Posterior vena cava (tissue), 2 donors: ENCODE measurements at regions of chr1 and their contacts with region 1.

Region 1: DNA sequence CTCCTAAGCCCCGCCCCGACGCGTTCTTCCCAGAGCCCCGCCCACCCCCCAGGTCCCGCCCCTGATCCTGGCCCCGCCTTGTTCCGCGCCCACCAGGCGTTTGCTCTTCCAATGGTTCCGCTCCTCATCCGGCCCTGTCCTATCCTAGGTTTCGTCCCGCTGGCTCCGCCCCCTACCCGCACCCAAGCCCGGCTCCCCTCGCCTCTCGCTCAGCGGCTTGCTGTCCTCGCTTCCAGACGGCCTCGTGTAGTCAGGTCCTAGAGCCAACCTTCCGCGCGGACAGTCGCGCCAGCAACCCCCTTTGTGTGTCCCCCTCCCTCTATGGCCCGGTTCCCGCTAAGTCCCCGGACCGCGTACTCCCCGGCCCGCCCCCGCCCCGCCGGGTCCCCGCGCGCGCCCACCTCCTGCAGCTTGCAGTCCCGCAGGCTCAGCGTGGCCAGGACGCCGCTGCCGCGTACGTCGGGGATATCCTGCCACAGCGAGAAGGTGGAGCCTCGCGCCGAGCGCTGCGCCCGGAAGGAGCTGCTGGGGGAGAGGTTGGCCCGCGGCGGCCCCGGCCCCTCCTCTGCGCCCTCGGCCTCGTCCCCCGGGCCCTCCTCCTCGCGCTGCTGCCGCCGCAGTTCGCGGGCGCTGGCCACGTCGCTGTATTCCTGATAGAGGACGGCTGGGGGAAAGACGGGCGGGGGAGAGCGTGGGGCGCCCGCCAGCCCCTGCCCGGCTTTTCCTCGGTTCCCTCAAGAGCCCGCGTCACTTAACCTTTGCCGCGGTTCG is 5.7 kb downstream of the ARHGEF19 start:
- DNase-seq: peak; percentile 99

Region 2: DNA sequence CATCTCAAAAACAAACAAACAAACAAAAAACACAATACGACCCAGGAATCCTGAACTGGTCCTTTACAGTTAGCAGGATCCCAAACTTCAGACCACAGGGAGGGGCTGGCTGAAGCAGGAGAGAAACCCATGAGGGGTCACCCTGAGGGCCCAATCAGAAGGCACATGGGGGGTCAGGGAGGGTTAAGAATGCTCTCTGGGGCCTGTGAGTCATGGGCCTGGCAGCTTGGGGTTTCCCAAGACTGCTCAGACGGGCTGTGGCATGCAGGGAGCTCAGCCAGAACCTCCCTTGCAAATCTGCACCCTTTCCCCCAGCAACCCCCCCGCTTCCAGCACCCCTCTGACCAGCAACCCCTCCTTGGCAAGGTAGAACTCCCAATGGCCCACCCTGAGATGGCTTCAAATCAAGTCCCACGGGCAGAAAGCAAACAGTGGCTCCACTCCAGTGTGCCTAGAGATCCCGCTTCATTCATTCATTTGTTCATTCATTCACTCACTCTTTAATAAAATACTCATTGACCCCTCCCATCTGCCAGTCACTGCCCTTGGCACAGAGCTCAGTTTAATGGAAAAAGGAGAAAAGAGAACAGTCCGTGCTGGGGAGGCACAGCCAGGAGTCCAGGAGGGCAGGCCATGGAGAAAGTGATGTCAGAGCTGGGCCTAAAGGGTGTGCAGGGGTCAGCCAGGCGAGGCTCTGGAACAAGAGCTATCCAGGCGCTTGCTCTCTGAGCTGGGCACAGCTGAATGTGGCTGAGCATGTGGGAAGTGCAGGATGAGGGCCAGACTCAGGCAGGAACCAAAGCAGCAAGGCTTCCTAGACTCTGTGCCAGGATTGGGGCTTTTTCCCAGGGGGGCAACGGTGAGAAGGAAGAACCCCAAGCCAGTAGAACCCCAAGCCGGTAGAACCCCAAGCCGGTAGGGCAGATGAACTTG is 407.5 kb before region 1 on chr1:
- intact Hi-C with region 1: no loop called
- DNase-seq: peak; percentile 95

Region 3: DNA sequence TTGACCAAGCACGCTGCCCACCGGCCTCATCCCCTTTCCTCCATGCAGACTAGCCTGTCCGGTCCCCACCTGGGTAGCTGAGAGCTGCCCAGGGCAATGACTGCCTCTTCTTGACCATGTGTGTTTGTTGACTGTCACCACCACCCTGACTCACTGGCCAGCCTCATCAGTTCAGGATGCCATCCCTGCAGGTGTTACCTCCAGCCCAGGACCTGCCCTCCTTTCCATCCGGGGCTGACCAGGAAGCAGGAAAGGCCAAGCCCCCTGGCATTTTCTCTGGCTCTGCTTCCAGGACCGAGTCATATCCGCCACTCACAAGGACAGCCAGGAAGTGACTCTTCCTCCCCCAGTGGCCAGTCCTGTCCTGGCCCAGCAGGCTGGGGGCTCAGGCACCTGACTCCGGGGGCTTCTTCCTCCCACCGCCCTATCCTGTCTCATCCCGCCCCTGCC is 67.9 kb before region 1 on chr1:
- intact Hi-C with region 1: no loop called
- DNase-seq: no peak

Region 4: DNA sequence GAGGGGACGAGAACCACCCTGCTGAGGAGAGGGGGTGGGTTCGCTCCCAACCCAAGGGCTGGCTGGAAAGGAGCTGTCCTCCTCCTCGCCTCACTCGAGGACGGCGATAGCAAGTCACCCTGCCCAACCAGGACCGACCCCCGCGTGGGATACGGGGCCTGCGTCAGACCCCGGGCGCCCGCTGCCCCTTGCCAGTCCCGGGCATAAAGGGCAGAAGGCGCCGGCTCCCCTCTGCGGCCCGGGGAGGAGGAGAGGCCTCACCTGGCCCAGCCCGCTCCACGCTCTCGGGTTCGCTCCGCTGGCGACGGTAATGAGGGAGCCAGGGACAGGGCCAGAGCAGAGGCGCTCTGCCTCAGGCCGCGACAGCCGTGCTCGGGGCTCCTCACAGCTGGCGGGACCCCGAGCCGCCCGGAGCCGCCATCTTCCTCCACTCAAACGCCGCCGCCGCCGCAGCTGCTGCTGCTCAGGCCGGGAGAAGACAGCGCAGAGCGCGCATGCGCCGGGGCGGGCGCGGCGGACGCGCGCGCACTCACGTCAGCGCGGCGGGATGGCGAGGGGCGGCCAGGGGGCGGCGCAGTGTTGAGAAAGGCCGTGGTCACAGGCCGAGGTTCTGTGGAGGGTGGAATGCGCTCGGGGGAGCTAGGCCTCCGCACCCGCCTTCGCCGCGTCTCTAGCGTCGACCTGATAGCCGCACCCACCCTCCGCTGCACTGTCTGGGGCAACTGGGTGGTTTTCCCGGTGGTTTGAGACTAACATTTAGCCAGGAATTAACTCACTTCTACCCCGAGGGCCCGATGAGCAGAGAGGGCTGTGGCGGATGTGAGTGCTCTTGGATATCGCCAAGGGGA is 145.5 kb after region 1 on chr1 and contains the start of gene FBXO42:
- intact Hi-C with region 1: loop called in 1 of 2 experiments (anchors 10 kb)
- DNase-seq: peak; percentile 97
- total RNA-seq, gene FBXO42: 17.8 to 20.8 TPM